Naive thymus-derived CD8-positive, alpha-beta T cell (primary cell): ENCODE measurements at regions of chr21 and their contacts with region 1.

Region 1: GRCh38 chr21:29018540-29018939 is 609 bp downstream of the RWDD2B start:
- DNase-seq: no peak
- ATAC-seq: no peak
- H3K4me3 Mint-ChIP-seq: peak overlapping the region; percentile 73 to 95 (median 90)
- H3K27ac Mint-ChIP-seq: peak overlapping the region; percentile 89 to 98 (median 94)
- H3K4me1 Mint-ChIP-seq: peaks cover 12 to 46% (median 36%) of the 10 kb centered on the region in 4 donors
- H3K27me3 Mint-ChIP-seq: no peaks in the 10 kb centered on the region

Region 2: GRCh38 chr21:28992526-28993292 is 25.8 kb before region 1 on chr21 and contains the start of gene LTN1:
- POLR2A ChIA-PET with region 1: interaction called, 130 read pairs
- DNase-seq: peak; percentile 92 to 99 (median 98)
- ATAC-seq: peak; percentile 91 to 92
- H3K4me3 Mint-ChIP-seq: peak within 1 kb of the TSS; percentile 92 to 99 (median 98)
- H3K27ac Mint-ChIP-seq: peak within 1 kb of the TSS; percentile 94 to 99 (median 98)
- H3K4me1 Mint-ChIP-seq: peaks cover 14 to 46% (median 38%) of the 10 kb centered on the region in 4 donors
- H3K27me3 Mint-ChIP-seq: no peaks in the 10 kb centered on the region
- polyA plus RNA-seq, gene LTN1: 12.0 to 14.1 (median 13.0) TPM